ENCODE measurements at regions of chr17 and their contacts with region 1.

Region 1: DNA sequence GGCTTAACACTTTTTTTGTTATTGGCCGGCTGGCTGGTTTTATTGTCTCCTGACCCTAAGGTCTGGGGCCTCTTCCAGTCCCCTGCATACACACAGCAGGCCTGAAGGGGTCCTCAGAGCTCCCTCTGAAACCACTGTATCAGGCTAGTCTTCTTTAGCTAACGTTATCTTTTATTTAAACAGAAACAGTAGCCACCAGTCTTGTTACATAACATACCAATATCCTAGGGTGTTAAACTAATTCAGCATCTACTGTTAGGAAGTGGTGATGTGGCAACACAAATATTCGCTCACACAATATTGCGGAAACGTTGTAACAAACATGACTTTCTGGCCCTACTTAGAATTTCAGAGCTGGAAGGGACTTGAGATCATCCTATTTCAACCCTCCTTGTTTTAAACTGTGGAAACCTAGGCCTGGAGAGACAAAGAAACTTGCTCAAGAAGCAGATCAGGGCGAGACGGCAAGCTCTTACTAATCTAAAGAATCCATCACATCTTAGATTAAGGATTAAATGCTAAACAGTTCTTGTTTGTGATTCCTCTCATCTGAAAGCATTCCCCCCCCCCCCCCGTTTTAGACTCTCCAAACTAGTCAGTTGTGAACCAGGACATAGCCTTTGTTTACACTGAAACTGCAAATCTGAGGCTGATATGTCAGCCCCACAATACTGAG is 1.7 kb upstream of the YPEL2 start:
- DNase-seq: peak in 30 of 35 experiments; percentile 15 to 73 (median 37)
- ATAC-seq: peak; percentile 39 to 42 (median 40)
- H3K4me3 ChIP-seq: no peak overlapping the region
- H3K4me3 Mint-ChIP-seq: peak overlapping the region; percentile 56 to 62 (median 61)
- H3K27ac ChIP-seq: peak overlapping the region; percentile 77
- H3K27ac Mint-ChIP-seq: peak overlapping the region; percentile 93 to 94
- H3K4me1 ChIP-seq: peaks cover 47 to 61% of the 10 kb centered on the region in 2 experiments
- H3K4me1 Mint-ChIP-seq: peaks cover 65 to 68% (median 65%) of the 10 kb centered on the region in 3 donors
- H3K27me3 ChIP-seq: no peaks in the 10 kb centered on the region
- H3K27me3 Mint-ChIP-seq: no peaks in the 10 kb centered on the region

Region 2: GRCh38 chr17:59311130-59311920 is 18.5 kb before region 1 on chr17:
- CTCF ChIA-PET with region 1: interaction called, 4 to 16 read pairs
- POLR2A ChIA-PET with region 1: no interaction called
- DNase-seq: peak in 18 of 35 experiments; percentile 5 to 79 (median 24)
- ATAC-seq: peak; percentile 93 to 98 (median 96)
- H3K4me3 ChIP-seq: no peak overlapping the region
- H3K4me3 Mint-ChIP-seq: no peak overlapping the region
- H3K27ac ChIP-seq: no peak overlapping the region
- H3K27ac Mint-ChIP-seq: no peak overlapping the region
- H3K4me1 ChIP-seq: no peaks in the 10 kb centered on the region
- H3K4me1 Mint-ChIP-seq: peaks cover 1 to 6% (median 4%) of the 10 kb centered on the region in 3 donors
- H3K27me3 ChIP-seq: peaks cover 0 to 3% of the 10 kb centered on the region in 2 experiments
- H3K27me3 Mint-ChIP-seq: no peaks in the 10 kb centered on the region

Region 3: GRCh38 chr17:59427425-59427921 is 97.7 kb after region 1 on chr17:
- CTCF ChIA-PET with region 1: interaction called in 1 of 2 experiments, 13 read pairs
- POLR2A ChIA-PET with region 1: no interaction called
- DNase-seq: peak in 1 of 35 experiments; percentile 25
- ATAC-seq: peak in 2 of 4 experiments; percentile 24 to 59
- H3K4me3 ChIP-seq: no peak overlapping the region
- H3K4me3 Mint-ChIP-seq: no peak overlapping the region
- H3K27ac ChIP-seq: no peak overlapping the region
- H3K27ac Mint-ChIP-seq: peak overlapping the region in 1 of 2 donors; percentile 28
- H3K4me1 ChIP-seq: no peaks in the 10 kb centered on the region
- H3K4me1 Mint-ChIP-seq: peaks cover 7 to 9% (median 8%) of the 10 kb centered on the region in 3 donors
- H3K27me3 ChIP-seq: peaks cover 0 to 2% of the 10 kb centered on the region in 2 experiments
- H3K27me3 Mint-ChIP-seq: no peaks in the 10 kb centered on the region

Region 4: DNA sequence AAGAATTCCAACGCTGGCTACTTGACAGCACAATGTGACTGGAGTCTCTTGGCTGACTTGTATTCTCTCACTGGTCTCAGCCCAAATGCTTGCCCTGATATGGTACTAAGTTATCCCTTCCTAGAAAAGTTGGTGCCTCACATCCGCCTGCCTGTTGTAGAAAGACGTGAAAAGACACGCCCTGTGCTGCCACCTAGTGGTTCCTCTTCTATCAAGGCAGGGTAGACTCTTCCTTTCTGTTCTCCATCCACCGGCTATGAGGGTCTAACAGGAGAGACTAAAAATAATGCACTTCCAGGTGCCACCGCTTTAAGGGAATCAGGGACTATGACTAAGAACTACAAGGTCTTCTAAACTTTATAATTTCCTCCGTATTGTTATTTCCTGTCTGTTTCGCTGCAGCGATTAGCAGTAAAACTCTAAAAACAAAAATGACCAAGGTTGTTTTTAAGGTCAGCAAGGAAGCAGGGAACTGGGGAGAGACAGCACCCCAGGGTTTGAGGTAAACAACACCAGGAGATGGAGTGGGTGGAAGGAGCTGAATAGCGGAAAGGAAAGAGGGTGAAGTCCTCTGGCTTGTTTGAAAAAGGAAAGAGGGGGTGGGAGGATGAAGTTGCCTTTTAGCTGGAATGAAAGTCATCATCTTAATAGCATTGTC is 111.1 kb after region 1 on chr17:
- CTCF ChIA-PET with region 1: interaction called, 6 to 43 read pairs
- POLR2A ChIA-PET with region 1: no interaction called
- DNase-seq: peak; percentile 61 to 94 (median 80)
- ATAC-seq: peak; percentile 96 to 100 (median 98)
- H3K4me3 ChIP-seq: no peak overlapping the region
- H3K4me3 Mint-ChIP-seq: peak overlapping the region in 2 of 3 donors; percentile 29 to 55
- H3K27ac ChIP-seq: no peak overlapping the region
- H3K27ac Mint-ChIP-seq: peak overlapping the region; percentile 79 to 83
- H3K4me1 ChIP-seq: peaks cover 16 to 19% of the 10 kb centered on the region in 2 experiments
- H3K4me1 Mint-ChIP-seq: peaks cover 21 to 31% (median 30%) of the 10 kb centered on the region in 3 donors
- H3K27me3 ChIP-seq: peaks cover 0 to 7% of the 10 kb centered on the region in 2 experiments
- H3K27me3 Mint-ChIP-seq: peaks cover 0 to 3% of the 10 kb centered on the region in 2 donors

Region 5: GRCh38 chr17:59734226-59734625 is 404.4 kb after region 1 on chr17:
- CTCF ChIA-PET with region 1: no interaction called
- POLR2A ChIA-PET with region 1: no interaction called
- DNase-seq: no peak
- ATAC-seq: no peak
- H3K4me3 ChIP-seq: no peak overlapping the region
- H3K4me3 Mint-ChIP-seq: no peak overlapping the region
- H3K27ac ChIP-seq: no peak overlapping the region
- H3K27ac Mint-ChIP-seq: no peak overlapping the region
- H3K4me1 ChIP-seq: peaks cover 0 to 2% of the 10 kb centered on the region in 2 experiments
- H3K4me1 Mint-ChIP-seq: peaks cover 9 to 13% (median 12%) of the 10 kb centered on the region in 3 donors
- H3K27me3 ChIP-seq: no peaks in the 10 kb centered on the region
- H3K27me3 Mint-ChIP-seq: no peaks in the 10 kb centered on the region

Measured in T-cell (primary cell).